ENCODE measurements at regions of chr3 and their contacts with region 1.

Region 1: DNA sequence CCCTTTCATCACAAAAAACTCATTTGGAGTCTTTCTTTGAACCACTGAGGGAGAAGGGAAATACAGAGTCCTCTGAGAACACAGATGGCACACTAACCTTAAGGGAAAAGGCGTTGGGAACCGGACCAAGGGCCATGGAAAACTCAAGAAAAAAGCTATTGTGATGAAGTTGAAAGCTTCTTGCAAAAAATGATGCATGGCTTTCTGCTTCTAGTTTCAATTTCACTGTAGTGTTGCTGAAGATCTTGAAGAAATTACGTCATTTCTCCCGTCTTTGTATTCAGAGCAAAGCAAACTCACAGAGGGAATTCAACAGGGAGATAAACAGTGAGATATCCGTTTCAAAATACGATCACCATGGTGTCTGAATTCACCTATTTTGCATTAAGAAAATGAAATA is 642.3 kb upstream of the ADAMTS9 start:
- DNase-seq: no peak
- CTCF ChIP-seq: no peak

Region 2: DNA sequence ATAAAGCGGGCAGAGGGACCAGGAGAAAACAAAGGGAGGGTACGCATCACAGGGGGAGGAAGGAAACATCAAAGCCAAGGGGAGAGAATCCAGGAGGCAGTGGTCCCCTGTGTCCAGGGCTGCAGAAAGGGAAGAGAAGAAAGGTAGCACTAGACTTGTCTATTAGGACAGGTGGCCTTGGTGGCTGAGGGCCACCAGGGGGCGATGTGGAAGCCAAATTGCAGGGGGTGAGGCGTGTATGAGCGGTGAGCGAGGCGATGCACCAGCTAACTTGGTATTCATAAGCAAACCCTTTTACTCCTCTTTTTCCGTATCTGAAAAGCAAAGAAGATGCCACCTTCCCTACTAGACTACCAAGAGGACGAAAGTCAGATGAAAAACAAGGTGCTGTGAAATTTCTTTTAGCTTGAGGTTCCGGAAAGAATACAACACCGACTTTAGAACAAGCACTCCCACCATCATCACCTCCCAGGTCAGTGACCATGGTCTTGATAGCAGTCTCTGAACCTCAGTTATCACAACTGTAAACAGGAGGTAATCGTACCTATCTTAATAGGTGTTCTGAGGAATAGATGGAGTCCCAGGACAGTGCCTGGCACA is 12.1 kb after region 1 on chr3:
- CTCF ChIA-PET with region 1: interaction called, 22 read pairs
- POLR2A ChIA-PET with region 1: no interaction called
- DNase-seq: peak; percentile 43
- CTCF ChIP-seq: peak; percentile 59

Region 3: DNA sequence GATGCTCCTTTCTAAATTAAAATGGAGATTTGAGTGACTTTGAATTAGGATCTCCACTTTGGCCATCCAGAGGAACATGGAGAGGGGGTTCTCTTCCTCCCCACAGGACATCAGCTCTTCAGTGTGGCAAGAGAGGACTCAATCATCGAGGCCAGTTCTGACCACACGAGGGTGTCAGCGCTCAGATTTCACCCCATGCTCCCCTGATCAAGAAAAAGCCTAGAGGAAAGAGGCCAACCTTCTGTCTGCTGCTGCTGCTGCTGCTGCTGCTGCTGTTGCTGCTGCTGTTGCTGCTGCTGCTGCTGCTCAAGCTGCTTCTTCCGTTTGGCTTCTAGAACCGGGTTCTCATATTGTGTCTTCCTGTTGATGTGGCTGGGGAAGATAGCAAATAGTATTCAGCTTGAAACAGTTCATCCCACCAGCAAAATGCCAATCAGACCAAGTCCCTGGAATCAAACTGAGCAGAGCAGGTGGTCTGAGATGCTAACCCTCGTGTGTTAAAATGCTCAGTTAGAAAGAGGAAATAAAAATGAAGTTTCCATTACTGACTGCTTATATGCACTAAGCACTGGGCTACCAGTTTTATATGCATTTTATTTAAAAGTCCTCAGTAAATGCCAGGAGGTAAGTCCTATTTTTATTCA is 109.7 kb after region 1 on chr3:
- CTCF ChIA-PET with region 1: no interaction called
- POLR2A ChIA-PET with region 1: no interaction called
- DNase-seq: no peak
- CTCF ChIP-seq: peak; percentile 34

Region 4: DNA sequence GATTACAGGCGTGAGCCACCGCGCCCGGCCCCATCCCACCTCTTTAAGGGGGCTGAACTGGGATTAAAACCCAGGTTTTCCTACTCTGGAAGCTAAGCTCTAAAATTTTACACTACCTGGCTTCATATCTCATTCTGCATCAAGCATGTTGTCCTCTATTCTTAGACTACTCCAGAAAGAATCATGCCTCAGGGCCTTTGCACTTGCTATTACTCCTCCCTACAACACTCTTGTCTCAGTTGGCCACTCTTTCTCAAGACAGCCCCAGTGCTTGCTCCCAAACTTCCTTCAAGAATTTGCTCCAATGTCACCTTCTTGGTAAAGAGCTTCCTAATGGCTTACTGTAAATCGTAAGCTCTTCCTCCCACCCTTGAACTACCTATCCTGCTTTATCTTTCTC is 186.9 kb after region 1 on chr3:
- CTCF ChIA-PET with region 1: no interaction called
- POLR2A ChIA-PET with region 1: no interaction called
- DNase-seq: no peak
- CTCF ChIP-seq: no peak

Measured in GM10248 (cell line).